Activated CD4-positive, alpha-beta T cell treated with anti-CD3 and anti-CD28 coated beads for 36 hours (primary cell): ENCODE measurements at regions of chr1 and their contacts with region 1.

Region 1: DNA sequence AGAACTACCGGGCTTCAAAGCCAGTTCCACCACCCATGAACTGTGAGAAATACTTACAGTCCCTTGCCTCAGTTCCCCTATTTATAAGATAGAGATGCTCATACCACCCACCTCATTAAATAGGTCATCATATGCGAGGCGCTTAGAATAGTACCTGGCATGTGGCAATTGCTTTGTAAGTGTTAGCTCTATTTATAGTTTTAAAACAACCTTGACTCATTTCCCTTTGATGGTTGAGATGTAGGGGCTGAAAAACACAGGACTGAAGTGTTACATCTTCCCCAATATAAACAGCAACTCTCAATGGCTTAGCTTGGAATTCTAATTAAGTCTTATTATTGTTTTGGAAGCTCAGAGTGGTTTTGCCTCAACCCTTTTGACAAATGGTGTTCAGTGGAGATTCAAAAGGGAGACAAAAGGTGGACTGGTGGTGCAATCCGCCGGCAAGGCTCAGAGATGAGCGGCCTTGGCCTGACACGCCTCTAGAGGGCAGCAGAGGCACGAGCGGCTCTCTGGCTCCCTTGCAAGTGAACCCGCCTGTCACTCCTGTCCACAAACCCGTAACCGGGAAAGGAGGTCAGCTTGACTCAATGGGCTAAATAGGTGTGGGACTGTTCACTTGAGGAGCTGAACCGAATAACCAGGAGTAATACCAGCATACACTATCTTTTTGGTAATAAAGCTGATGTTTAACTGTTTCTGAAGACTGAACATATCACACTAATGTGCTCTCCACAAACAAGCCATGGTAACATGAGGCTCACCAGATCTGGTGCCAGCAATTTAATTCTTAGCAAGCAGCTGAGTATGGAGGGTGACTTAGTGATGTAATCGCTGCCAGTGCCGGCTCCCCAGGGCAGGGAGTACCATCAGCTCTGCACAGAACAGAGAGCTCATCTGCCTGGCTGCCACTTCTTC is 19.5 kb upstream of the SMYD2 start:
- DNase-seq: peak; percentile 91
- ATAC-seq: peak; percentile 81
- H3K4me3 Mint-ChIP-seq: no peak overlapping the region
- H3K27ac Mint-ChIP-seq: peak overlapping the region; percentile 34
- H3K4me1 Mint-ChIP-seq: peaks cover 15% of the 10 kb centered on the region
- H3K27me3 Mint-ChIP-seq: peaks cover 45% of the 10 kb centered on the region

Region 2: DNA sequence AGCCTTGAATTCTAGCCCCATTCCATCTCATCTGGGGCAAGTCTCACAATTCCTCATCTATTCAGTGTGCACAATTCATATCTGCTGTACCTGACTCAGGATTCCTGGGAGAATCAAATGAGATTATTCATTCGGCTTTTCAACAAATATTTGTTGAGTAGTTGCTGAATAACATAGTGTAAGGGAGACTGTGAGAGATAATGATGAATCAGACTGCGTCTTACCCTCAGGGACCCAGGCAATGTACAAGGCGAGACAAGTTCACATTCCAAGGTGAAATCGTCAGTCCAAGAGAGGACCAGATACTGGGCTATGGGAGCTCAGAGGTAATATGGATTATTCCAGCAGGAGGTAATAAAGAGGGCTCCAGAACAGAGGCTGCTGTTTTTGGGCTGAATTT is 48.3 kb before region 1 on chr1:
- CTCF ChIA-PET with region 1: interaction called, 8 read pairs
- POLR2A ChIA-PET with region 1: no interaction called
- intact Hi-C with region 1: loop called in 1 of 2 experiments (anchors 2 kb)
- DNase-seq: no peak
- ATAC-seq: no peak
- H3K4me3 Mint-ChIP-seq: no peak overlapping the region
- H3K27ac Mint-ChIP-seq: no peak overlapping the region
- H3K4me1 Mint-ChIP-seq: peaks cover 4% of the 10 kb centered on the region
- H3K27me3 Mint-ChIP-seq: peaks cover 13% of the 10 kb centered on the region

Region 3: GRCh38 chr1:214281021-214281719 is 19.7 kb after region 1 on chr1 and contains the start of gene SMYD2:
- CTCF ChIA-PET with region 1: interaction called, 7 read pairs
- POLR2A ChIA-PET with region 1: no interaction called
- intact Hi-C with region 1: loop called in 1 of 2 experiments (anchors 1 kb)
- DNase-seq: peak; percentile 82
- ATAC-seq: peak; percentile 74
- H3K4me3 Mint-ChIP-seq: peak within 1 kb of the TSS; percentile 92
- H3K27ac Mint-ChIP-seq: peak within 1 kb of the TSS; percentile 89
- H3K4me1 Mint-ChIP-seq: peaks cover 37% of the 10 kb centered on the region
- H3K27me3 Mint-ChIP-seq: no peaks in the 10 kb centered on the region
- total RNA-seq, gene SMYD2: 38.2 to 40.1 TPM

Region 4: GRCh38 chr1:214316593-214316992 is 55.1 kb after region 1 on chr1:
- CTCF ChIA-PET with region 1: interaction called, 18 read pairs
- POLR2A ChIA-PET with region 1: no interaction called
- intact Hi-C with region 1: no loop called
- DNase-seq: no peak
- ATAC-seq: no peak
- H3K4me3 Mint-ChIP-seq: no peak overlapping the region
- H3K27ac Mint-ChIP-seq: no peak overlapping the region
- H3K4me1 Mint-ChIP-seq: peaks cover 6% of the 10 kb centered on the region
- H3K27me3 Mint-ChIP-seq: no peaks in the 10 kb centered on the region

Region 5: GRCh38 chr1:214506972-214507482 is 245.6 kb after region 1 on chr1:
- CTCF ChIA-PET with region 1: no interaction called
- POLR2A ChIA-PET with region 1: no interaction called
- intact Hi-C with region 1: loop called in 1 of 2 experiments (anchors 5 kb)
- DNase-seq: no peak
- ATAC-seq: peak; percentile 61
- H3K4me3 Mint-ChIP-seq: no peak overlapping the region
- H3K27ac Mint-ChIP-seq: no peak overlapping the region
- H3K4me1 Mint-ChIP-seq: peaks cover 8% of the 10 kb centered on the region
- H3K27me3 Mint-ChIP-seq: peaks cover 5% of the 10 kb centered on the region

Region 6: DNA sequence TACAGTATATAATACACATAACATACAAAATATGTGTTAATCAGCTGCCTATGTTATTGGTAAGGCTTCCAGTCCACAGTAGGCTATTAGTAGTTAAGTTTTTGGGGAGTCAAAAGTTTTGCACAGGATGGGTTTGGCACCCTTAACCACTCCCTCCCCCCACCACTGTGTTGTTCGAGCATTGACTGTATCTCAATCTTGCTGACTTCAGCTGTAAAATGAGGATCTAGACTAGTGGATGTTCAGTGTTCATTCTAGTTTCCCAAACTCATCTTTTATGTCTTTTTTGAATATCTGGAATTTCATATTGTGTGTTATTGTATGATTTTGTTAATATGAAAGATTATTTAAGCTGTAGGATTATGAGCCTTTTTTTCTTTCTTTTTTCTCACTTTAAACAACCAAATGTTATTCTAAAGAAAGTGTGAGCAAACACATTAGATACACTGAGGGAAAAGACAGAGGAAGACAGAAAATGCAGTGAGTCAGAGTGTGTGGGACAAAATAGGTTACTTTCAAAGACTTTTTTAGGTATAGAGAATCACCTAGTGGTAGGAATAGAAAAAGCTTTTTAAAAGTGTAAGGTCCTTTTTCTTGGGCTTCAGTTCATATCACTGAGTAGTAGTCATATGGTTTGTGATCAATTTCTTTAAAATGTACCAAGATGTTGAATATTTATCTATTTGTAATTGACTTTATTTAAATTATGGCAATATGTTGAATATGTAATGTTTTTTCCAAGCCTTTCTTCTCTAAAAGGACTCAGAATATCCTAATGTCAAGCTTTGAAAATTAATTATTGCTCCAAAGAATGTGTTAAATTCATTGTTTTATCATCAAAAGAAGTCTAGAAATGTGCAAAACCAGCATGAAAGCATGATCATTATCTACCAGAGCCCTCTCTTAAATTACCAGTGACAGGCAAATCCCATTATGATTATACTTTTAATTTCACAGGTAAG is 323.6 kb after region 1 on chr1:
- CTCF ChIA-PET with region 1: interaction called, 35 read pairs
- POLR2A ChIA-PET with region 1: no interaction called
- intact Hi-C with region 1: loop called (anchors 1 to 10 kb)
- DNase-seq: no peak
- ATAC-seq: peak; percentile 89
- H3K4me3 Mint-ChIP-seq: no peak overlapping the region
- H3K27ac Mint-ChIP-seq: no peak overlapping the region
- H3K4me1 Mint-ChIP-seq: peaks cover 6% of the 10 kb centered on the region
- H3K27me3 Mint-ChIP-seq: peaks cover 3% of the 10 kb centered on the region

Region 7: DNA sequence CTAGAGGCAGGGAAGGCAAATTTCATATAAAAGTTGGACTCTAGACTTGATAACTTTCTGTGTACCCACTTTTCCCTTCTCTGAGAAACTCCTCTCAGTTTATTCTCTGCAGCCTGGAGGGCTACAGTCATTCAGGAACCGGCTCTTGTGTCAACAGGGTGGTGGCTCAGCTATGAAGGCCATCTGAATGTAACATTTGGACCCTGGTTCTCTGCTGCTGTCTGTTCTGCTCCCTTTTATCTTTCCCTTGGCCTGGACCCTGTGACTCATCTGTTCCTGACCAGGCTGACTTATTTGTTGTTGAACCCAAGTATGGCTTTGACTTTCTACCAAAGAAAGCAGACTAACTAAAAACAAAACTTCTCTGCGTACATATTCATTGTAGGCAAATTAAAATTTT is 416.9 kb after region 1 on chr1:
- CTCF ChIA-PET with region 1: no interaction called
- POLR2A ChIA-PET with region 1: no interaction called
- intact Hi-C with region 1: no loop called
- DNase-seq: no peak
- ATAC-seq: no peak
- H3K4me3 Mint-ChIP-seq: no peak overlapping the region
- H3K27ac Mint-ChIP-seq: no peak overlapping the region
- H3K4me1 Mint-ChIP-seq: no peaks in the 10 kb centered on the region
- H3K27me3 Mint-ChIP-seq: no peaks in the 10 kb centered on the region